BJ (cell line): ENCODE measurements at regions of chr3 and their contacts with region 1.

Region 1: DNA sequence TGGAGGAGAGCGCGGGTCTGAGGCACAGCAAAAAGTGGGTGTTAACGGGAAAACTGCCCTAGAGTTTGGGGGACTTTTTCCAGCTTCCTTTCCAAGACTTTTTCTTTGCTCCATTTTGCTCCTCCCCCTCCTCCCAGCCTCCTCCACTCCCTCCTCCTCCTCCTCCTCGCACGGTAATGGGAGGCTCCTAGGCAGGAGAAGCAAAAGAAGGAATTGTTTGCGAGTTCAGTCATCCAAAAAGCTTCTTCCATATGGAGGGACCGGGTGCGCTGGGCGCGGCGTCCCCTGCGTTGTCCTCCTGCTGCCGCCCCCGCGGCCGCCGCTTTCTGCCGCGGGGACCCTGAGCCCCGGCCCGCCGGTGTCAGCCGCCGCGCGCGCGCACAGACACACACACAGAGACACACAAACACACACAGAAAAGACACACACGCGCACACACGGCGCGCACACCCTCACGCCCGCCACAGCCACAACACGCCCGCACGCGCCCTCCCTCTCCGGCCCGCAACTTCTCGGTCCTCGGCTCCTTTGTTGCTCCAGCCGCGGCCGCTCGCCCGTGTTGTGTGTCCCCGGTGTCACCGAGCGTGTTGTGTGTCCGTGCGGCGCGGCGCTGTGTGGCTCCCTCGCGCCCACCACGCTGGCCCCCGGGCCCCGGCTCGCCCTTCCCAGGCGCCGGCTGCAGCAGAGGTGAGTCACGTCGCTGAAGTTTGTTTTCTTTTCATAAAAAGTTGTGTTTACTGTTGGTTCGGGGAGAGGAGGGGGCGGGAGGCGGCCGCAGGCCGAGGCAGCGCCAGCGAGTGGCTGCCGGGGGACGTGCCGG is at the start of gene BOC:
- DNase-seq: no peak
- H3K4me3 ChIP-seq: peak within 1 kb of the TSS; percentile 81
- H3K27me3 ChIP-seq: no peaks in the 10 kb centered on the region
- CTCF ChIP-seq: no peak
- polyA plus RNA-seq, gene BOC: 11.3 and 17.7 TPM in 2 replicates

Region 2: DNA sequence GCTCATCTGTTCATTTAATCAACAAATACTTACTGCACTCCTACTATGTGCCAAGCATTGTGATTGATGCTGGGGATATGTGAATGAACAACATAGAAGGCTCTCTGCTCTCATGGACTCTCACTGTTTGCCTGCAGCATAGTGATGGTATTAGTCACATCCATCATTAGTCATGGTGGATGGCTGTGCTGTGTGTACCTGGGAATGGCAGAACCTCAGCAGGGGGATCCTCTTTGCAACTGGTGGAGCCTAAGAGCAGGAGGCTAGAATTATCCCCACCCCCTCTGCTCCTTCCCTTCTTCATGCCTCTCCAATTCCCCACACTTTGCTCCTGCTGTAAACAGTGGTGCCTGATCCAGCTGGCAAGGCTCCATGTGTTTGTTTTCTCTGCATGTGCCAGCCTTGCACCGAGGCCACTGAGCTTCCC is 20.3 kb after region 1 on chr3:
- CTCF ChIA-PET with region 1: interaction called, 6 read pairs
- POLR2A ChIA-PET with region 1: interaction called, 13 read pairs
- DNase-seq: peak; percentile 37
- H3K4me3 ChIP-seq: no peak overlapping the region
- H3K27me3 ChIP-seq: no peaks in the 10 kb centered on the region
- CTCF ChIP-seq: no peak